Naive thymus-derived CD4-positive, alpha-beta T cell (primary cell): ENCODE measurements at regions of chr20 and their contacts with region 1.

Region 1: GRCh38 chr20:58309575-58310290 is at the start of gene RAB22A:
- DNase-seq: peak; percentile 74 to 89 (median 84)
- ATAC-seq: peak; percentile 81
- H3K4me3 ChIP-seq: peak within 1 kb of the TSS; percentile 78
- H3K4me3 Mint-ChIP-seq: peak within 1 kb of the TSS; percentile 81 to 97 (median 92)
- H3K27ac ChIP-seq: peak within 1 kb of the TSS; percentile 99
- H3K27ac Mint-ChIP-seq: peak within 1 kb of the TSS; percentile 92 to 99 (median 97)
- H3K4me1 ChIP-seq: peaks cover 38 to 66% of the 10 kb centered on the region in 2 donors
- H3K4me1 Mint-ChIP-seq: peaks cover 23 to 84% (median 67%) of the 10 kb centered on the region in 7 donors
- H3K27me3 ChIP-seq: no peaks in the 10 kb centered on the region
- H3K27me3 Mint-ChIP-seq: no peaks in the 10 kb centered on the region
- total RNA-seq, gene RAB22A: 17.3 to 24.7 (median 17.8) TPM

Region 2: DNA sequence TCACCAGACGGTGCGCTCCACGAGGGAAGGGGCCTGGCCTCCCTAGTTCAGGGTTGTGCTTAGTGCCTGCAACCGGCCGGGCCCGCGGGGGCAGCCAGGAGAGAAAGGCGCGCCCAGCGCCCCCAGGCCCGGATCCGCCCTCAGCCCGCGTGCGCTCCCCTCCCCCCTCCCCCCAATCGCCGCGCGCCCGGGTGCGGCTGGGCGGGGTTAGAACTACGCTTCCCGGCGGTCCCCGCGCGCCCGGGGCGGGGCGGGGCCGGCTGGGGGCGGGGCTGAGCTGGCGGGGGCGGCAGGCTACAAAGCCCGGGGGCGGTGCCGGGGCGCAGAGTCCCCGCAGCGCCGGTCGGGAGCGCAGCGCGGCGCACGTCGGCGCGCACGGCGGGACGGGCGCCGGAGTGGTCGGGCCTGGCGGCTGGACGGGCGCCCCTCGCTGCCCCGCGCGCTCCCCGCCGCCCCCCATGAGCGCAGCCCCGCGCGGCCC is 918.6 kb before region 1 on chr20 and contains the start of gene RBM38:
- CTCF ChIA-PET with region 1: interaction called, 3 read pairs
- POLR2A ChIA-PET with region 1: no interaction called
- intact Hi-C with region 1: loop called in 1 of 2 experiments (anchors 1 kb)
- DNase-seq: peak; percentile 64 to 89 (median 71)
- ATAC-seq: peak; percentile 83
- H3K4me3 ChIP-seq: peak within 1 kb of the TSS; percentile 99
- H3K4me3 Mint-ChIP-seq: peak within 1 kb of the TSS; percentile 90 to 99 (median 98)
- H3K27ac ChIP-seq: peak within 1 kb of the TSS; percentile 83
- H3K27ac Mint-ChIP-seq: peak within 1 kb of the TSS; percentile 92 to 100 (median 99)
- H3K4me1 ChIP-seq: peaks cover 45 to 47% of the 10 kb centered on the region in 2 donors
- H3K4me1 Mint-ChIP-seq: peaks cover 36 to 54% (median 45%) of the 10 kb centered on the region in 7 donors
- H3K27me3 ChIP-seq: no peaks in the 10 kb centered on the region
- H3K27me3 Mint-ChIP-seq: no peaks in the 10 kb centered on the region
- total RNA-seq, gene RBM38: 70.6 to 260 (median 127) TPM

Region 3: DNA sequence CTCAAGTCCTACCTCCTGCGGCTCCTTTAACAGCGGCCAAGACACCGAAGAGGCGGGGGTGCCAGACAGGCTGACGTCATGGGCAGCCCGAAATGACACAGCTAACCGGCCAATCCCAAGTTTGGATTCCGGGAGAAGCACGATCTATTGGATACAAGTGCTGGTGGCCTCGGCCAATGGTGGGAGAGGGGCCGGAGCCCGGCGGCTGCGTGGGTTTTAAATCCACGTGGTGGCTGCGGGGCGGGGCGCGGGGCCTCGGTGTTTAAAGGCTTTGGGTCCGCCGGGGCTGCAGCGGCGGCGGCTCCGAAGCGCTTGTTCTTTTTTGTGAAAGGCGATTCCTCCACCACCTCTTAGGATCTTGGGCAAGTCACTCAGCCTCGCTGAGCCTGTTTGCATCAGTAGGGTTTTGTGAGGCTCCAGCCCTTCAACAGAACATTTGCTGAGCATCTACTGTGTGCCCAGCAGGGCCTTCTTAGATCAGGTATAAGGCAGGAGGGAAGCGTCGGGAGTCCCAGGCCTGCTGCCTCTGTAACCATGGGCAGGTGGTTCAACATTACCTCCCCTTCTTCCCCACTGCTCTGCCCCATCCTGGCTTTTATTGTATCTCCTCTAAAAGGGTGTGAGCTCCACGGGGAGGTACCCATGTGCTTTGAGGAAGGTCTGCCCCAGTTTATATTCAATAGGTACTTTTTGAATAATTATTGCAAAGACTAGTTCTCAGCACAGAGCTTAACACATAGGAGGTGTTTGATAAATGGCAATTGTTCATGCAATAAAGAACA is 591.1 kb before region 1 on chr20:
- CTCF ChIA-PET with region 1: no interaction called
- POLR2A ChIA-PET with region 1: no interaction called
- intact Hi-C with region 1: loop called in 1 of 2 experiments (anchors 5 kb)
- DNase-seq: peak; percentile 59 to 90 (median 87)
- ATAC-seq: peak; percentile 98
- H3K4me3 ChIP-seq: peak overlapping the region; percentile 49
- H3K4me3 Mint-ChIP-seq: peak overlapping the region; percentile 53 to 79 (median 70)
- H3K27ac ChIP-seq: peak overlapping the region; percentile 52
- H3K27ac Mint-ChIP-seq: peak overlapping the region in 8 of 9 donors; percentile 41 to 81 (median 58)
- H3K4me1 ChIP-seq: peaks cover 5 to 7% of the 10 kb centered on the region in 2 donors
- H3K4me1 Mint-ChIP-seq: peaks cover 0 to 26% (median 12%) of the 10 kb centered on the region in 7 donors
- H3K27me3 ChIP-seq: no peaks in the 10 kb centered on the region
- H3K27me3 Mint-ChIP-seq: peaks cover 0 to 25% (median 0%) of the 10 kb centered on the region in 5 donors

Region 4: DNA sequence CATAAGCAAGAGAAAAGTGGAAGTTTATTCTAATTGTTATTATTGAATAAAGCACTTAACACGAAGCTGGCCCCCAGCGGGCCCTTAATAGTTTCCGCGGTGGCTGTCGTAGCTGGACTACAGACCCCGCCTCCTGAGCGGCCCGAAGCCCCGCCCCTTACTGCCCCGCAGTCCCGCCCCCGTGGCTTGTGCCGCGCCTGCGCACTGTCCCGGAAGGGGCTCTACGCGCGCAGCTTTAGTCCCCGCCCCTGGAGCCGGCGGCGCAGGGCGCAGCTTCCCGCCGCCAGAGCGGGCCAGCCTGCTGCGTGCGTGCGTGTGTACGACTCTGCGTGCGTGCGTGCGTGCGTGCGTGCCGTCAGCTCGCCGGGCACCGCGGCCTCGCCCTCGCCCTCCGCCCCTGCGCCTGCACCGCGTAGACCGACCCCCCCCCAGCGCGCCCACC is 79.2 kb after region 1 on chr20 and contains the start of gene VAPB:
- CTCF ChIA-PET with region 1: no interaction called
- POLR2A ChIA-PET with region 1: interaction called, 16 read pairs
- intact Hi-C with region 1: loop called (anchors 1 kb)
- DNase-seq: peak; percentile 94 to 99 (median 98)
- ATAC-seq: peak; percentile 98
- H3K4me3 ChIP-seq: peak within 1 kb of the TSS; percentile 77
- H3K4me3 Mint-ChIP-seq: peak within 1 kb of the TSS; percentile 82 to 100 (median 96)
- H3K27ac ChIP-seq: peak within 1 kb of the TSS; percentile 100
- H3K27ac Mint-ChIP-seq: peak within 1 kb of the TSS; percentile 84 to 99 (median 97)
- H3K4me1 ChIP-seq: peaks cover 13 to 28% of the 10 kb centered on the region in 2 donors
- H3K4me1 Mint-ChIP-seq: peaks cover 29 to 44% (median 42%) of the 10 kb centered on the region in 7 donors
- H3K27me3 ChIP-seq: no peaks in the 10 kb centered on the region
- H3K27me3 Mint-ChIP-seq: peaks cover 0 to 11% (median 0%) of the 10 kb centered on the region in 5 donors
- total RNA-seq, gene VAPB: 23.0 to 37.0 (median 27.6) TPM

Region 5: GRCh38 chr20:58850693-58851174 is 541.0 kb after region 1 on chr20 and contains the start of gene GNAS-AS1:
- CTCF ChIA-PET with region 1: no interaction called
- POLR2A ChIA-PET with region 1: no interaction called
- intact Hi-C with region 1: loop called in 1 of 2 experiments (anchors 5 kb)
- DNase-seq: peak; percentile 57 to 81 (median 78)
- ATAC-seq: peak; percentile 87
- H3K4me3 ChIP-seq: peak within 1 kb of the TSS; percentile 61
- H3K4me3 Mint-ChIP-seq: peak within 1 kb of the TSS; percentile 83 to 95 (median 92)
- H3K27ac ChIP-seq: no peak within 1 kb of the TSS
- H3K27ac Mint-ChIP-seq: peak within 1 kb of the TSS in 4 of 9 donors; percentile 19 to 81 (median 54)
- H3K4me1 ChIP-seq: no peaks in the 10 kb centered on the region
- H3K4me1 Mint-ChIP-seq: peaks cover 11 to 36% (median 30%) of the 10 kb centered on the region in 7 donors
- H3K27me3 ChIP-seq: peaks cover 0 to 10% of the 10 kb centered on the region in 2 donors
- H3K27me3 Mint-ChIP-seq: peaks cover 21 to 67% (median 27%) of the 10 kb centered on the region in 5 donors
- total RNA-seq, gene GNAS-AS1: 0.13 to 2.0 (median 1.5) TPM

Region 6: DNA sequence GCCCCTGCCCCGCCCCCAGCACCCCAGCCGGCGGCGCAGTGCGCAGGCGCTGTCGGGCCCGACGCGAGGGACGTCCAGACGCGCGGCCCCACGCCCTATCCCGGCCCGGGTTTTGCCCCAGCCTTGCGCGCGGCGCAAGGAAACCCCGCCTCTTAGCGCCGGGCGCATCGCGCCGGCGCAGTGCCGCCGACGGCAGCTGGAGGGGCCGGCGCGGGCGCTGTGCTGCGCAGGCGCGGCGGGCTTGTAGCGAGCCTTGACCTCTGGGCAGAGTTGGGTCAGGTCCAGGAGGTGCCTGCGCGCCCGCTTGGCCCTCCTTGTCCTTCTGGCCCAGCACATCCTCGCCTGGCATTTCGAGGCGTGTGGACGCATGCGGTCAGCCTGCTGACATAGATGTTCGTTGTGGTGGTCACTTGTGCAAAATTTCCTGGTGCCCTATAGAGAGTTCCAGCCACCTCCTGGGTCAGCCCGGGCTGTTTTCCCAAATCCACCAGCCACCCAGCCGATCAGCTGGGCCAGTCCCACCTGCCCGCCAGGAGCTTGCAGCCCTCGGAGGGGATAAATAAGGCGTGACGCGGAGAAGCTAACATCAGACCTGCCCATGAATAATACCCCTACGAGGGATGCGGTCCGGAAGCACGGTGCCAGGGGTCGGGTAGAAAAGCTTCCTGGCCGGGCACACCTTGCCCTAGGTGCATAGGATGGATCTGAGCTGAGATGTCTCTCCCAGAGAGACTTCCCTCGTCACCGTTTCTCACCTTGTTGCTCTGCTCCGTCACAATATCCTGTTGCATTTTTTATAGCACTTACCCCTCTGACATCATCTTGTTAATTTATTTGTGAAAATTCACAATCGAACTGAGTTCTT is 733.3 kb after region 1 on chr20:
- CTCF ChIA-PET with region 1: no interaction called
- POLR2A ChIA-PET with region 1: no interaction called
- intact Hi-C with region 1: loop called in 1 of 2 experiments (anchors 5 kb)
- DNase-seq: peak; percentile 90 to 98 (median 94)
- ATAC-seq: peak; percentile 98
- H3K4me3 ChIP-seq: peak overlapping the region; percentile 76
- H3K4me3 Mint-ChIP-seq: peak overlapping the region; percentile 81 to 96 (median 90)
- H3K27ac ChIP-seq: peak overlapping the region; percentile 93
- H3K27ac Mint-ChIP-seq: peak overlapping the region; percentile 76 to 96 (median 91)
- H3K4me1 ChIP-seq: peaks cover 30 to 32% of the 10 kb centered on the region in 2 donors
- H3K4me1 Mint-ChIP-seq: peaks cover 35 to 54% (median 50%) of the 10 kb centered on the region in 7 donors
- H3K27me3 ChIP-seq: no peaks in the 10 kb centered on the region
- H3K27me3 Mint-ChIP-seq: no peaks in the 10 kb centered on the region